Right ventricle myocardium inferior (tissue), 1 donor: ENCODE measurements at regions of chr1 and their contacts with region 1.

Region 1: GRCh38 chr1:205749234-205750137 is 496 bp downstream of the NUCKS1 start:
- DNase-seq: peak; percentile 96
- ATAC-seq: peak; percentile 94

Region 2: DNA sequence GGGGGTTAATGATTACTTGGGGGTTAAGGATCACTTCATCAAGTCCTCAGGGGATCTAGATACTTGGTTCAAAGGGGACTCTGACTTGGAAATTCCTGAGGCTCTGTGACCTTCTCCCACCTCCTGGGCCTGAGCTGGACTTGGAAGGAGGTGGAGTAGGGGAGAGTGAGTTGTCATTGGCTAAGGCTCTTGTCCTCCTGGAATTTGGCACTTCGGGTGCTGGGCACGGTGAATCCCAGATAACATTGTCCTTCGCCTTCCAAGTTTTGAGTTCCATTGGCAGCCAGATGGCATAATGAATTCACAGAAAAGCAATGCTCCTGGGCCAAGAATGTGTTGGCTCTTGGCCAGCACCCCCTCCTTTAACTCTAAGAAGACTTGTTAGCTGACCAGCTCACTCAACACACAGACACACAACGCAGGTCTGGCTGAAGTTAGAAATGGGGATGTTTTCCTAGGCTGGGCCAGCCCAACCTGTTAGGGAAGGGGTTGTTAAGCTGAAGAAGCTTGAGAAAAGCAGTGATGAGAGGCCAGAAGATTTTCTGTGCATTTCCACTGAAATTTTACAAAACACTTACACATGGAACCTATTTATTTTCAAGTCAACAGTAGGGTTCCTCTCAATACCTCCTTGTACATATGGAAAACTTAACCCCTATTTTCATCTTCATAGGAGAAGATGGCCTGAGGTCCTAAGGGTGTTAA is 164.1 kb after region 1 on chr1:
- intact Hi-C with region 1: loop called (anchors 1 kb)
- DNase-seq: no peak
- ATAC-seq: peak; percentile 62

Region 3: GRCh38 chr1:206081856-206082255 is 332.4 kb after region 1 on chr1:
- intact Hi-C with region 1: no loop called
- DNase-seq: no peak
- ATAC-seq: no peak